ENCODE measurements at regions of chr1 and their contacts with region 1.

Region 1: GRCh38 chr1:203351037-203352013 is at the start of gene FMOD:
- DNase-seq: no peak
- total RNA-seq, gene FMOD: not detected in 2 replicates

Region 2: DNA sequence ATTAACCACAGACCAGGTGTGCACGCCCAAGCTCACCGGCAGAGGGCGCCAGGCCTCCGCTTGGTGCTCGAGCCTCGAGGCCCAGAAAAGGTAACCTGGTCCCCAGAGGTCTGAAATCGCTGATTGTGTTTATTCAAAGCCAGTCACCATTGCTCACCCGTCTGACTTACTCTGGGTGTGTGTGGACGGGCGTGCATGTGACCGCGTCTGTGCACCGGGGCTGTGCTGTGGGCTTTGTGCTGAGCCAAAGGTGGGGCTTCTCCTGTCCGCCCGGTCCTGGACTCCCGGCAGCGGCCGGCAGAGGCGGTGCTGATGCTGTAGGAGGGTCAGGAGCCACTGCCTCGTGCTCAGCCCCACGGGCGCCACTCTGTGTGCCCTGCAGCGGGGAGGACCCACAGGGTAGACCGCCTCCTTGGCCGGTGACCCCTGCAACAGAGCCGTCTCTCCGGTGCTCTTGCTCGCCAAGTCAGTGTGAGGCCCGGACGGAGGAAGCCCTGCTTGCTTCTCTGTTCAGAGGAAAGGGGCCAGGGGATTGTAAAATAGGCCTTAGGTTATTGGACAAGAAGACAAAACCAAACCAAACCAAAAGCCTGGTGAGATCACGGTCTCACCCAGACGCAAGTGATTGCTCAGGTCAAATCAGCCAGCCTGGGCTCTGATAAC is 78.0 kb before region 1 on chr1:
- in situ Hi-C with region 1: loop called (anchors 25 kb)
- DNase-seq: peak; percentile 93

Region 3: GRCh38 chr1:203702130-203702577 is 350.8 kb after region 1 on chr1:
- in situ Hi-C with region 1: loop called (anchors 25 kb)
- DNase-seq: peak; percentile 48

Measured in Caki2 (cell line).